ENCODE measurements at regions of chr19 and their contacts with region 1.

Region 1: GRCh38 chr19:9406798-9407352 is 28.5 kb downstream of the ZNF266 start:
- DNase-seq: peak in 1 of 2 donors; percentile 23
- H3K4me3 ChIP-seq: peak overlapping the region; percentile 33 to 72 (median 60)
- H3K27ac ChIP-seq: peak overlapping the region; percentile 29 to 43
- H3K4me1 ChIP-seq: no peaks in the 10 kb centered on the region
- H3K27me3 ChIP-seq: no peaks in the 10 kb centered on the region
- CTCF ChIP-seq: no peak
- POLR2A ChIP-seq: no peak

Region 2: DNA sequence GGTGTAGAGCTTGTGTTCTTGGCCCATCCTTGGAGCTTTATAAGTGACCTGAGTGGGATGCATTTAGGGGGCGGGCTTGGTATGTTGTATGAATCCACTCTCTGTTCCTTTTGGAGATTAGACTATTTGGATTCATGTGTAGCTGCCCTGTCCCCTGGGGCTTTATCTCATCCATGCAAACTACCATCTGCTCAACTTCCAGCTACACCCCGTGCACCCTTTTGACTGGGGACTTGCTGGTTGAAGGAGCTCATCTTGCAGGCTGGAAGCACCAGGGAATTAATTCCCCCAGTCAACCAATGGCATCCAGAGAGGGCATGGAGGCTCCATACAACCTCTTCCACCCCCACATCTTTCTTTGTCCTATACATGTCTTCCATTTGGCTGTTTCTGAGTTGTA is 1637.7 kb before region 1 on chr19:
- intact Hi-C with region 1: no loop called
- DNase-seq: no peak
- H3K4me3 ChIP-seq: no peak overlapping the region
- H3K27ac ChIP-seq: no peak overlapping the region
- H3K4me1 ChIP-seq: no peaks in the 10 kb centered on the region
- H3K27me3 ChIP-seq: peaks cover 0 to 32% of the 10 kb centered on the region in 2 donors
- CTCF ChIP-seq: no peak
- POLR2A ChIP-seq: no peak

Region 3: DNA sequence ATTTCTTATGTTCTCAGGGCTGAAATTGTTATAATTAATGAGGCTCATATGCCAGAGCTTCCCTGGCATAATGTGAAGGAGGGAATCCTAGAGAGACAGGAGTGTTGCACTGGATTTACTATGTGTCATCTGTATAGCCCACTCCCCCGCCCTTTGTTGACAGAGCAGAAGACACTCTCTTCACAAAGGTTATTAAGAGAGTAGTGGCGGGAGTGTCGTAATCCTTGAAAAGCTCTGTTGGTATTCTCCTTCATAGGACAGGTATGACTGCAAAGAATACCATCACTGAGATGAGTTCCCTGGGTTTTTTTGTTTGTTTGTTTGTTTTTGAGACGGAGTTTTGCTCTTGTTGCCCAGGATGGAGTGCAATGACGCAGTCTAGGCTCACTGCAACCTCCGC is 163.4 kb after region 1 on chr19:
- intact Hi-C with region 1: loop called (anchors 5 kb)
- DNase-seq: no peak
- H3K4me3 ChIP-seq: no peak overlapping the region
- H3K27ac ChIP-seq: no peak overlapping the region
- H3K4me1 ChIP-seq: no peaks in the 10 kb centered on the region
- H3K27me3 ChIP-seq: no peaks in the 10 kb centered on the region
- CTCF ChIP-seq: no peak
- POLR2A ChIP-seq: no peak